CD4-positive, alpha-beta memory T cell (primary cell): ENCODE measurements at regions of chr19 and their contacts with region 1.

Region 1: DNA sequence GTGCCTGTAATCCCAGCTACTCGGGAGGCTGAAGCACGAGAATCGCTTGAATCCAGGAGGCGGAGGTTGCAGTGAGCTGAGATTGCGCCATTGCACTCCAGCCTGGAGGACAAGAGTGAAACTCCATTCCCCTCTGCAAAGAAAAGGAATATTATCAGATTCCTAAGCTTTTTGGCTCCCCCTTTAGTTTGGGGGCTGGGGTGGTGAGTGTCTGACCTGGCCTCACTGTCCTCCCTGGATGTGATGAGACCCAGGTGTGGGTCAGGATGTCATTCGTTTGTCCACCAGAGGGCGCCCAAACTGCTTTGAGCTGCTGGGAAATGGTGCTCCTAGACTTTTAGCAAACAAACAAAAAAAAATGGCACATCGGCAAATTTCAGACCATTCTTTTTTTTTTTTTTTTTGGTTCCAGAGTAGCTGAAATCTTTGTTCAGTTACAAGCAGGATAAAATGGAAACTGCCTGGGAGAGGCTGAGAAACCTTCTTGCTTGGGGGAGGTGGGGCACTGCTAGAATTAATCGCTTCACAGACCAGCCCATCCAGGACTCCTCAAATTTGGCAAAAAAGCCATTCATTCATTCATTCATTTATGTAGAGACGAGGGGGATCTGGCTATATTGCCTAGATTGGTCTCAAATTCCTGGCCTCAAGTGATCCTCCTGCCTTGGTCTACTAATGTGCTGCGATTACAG is 29.4 kb downstream of the SPC24 start:
- DNase-seq: peak; percentile 62 to 66 (median 65)
- H3K4me3 ChIP-seq: no peak overlapping the region
- H3K4me3 Mint-ChIP-seq: no peak overlapping the region
- H3K27ac ChIP-seq: no peak overlapping the region
- H3K27ac Mint-ChIP-seq: peak overlapping the region in 6 of 7 donors; percentile 46 to 82 (median 64)
- H3K4me1 ChIP-seq: no peaks in the 10 kb centered on the region
- H3K4me1 Mint-ChIP-seq: peaks cover 0 to 4% (median under 1%) of the 10 kb centered on the region in 4 donors
- H3K27me3 ChIP-seq: no peaks in the 10 kb centered on the region
- H3K27me3 Mint-ChIP-seq: no peaks in the 10 kb centered on the region

Region 2: DNA sequence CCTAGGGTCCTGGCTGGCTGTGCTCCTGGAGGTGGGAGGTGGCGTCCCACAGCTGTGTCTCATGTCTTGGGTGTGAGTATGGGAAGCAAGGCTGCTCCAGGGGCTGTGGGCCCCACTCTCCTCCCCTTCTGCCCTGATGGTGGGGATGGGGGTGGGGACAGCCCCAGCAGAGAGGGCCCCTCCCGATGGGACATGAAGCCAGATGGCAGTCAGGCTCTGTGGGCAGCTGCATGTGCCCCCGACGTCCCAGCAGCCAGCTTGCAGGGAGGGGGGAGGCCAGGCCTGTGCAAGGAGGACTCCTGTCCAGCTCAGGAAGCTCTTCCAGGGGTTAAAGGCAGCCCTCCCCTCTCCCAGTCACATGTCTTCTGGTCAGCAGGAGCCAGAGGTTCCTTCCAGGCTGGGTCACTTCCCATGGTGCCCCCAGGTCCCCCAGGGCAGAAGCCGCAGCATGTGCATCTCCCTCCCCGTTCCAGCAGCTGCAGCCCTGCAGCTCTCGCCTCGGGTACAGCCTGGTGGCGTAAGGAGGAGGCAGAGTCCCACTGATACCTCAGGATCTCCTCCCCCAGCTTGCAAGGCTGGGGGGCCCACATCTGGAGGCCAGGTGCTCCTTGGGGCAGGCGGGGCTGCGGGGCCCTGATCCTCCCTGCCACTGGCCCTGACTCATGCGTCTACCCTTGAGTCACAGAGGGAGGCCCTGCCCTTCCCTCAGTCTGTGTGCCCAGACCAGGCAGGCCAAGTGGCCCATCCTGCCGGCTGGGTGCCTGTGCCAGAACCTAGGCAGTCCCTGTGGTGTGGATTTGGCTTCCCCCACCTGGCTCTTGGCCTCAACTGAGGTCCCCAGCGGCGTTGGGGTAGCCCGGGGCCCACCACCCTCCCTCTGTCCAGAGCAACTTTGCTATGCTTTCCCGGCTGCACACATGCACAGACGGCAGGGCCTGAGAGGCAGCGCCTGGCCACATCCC is 210.7 kb before region 1 on chr19:
- CTCF ChIA-PET with region 1: no interaction called
- POLR2A ChIA-PET with region 1: no interaction called
- intact Hi-C with region 1: no loop called
- DNase-seq: no peak
- H3K4me3 ChIP-seq: no peak overlapping the region
- H3K4me3 Mint-ChIP-seq: no peak overlapping the region
- H3K27ac ChIP-seq: no peak overlapping the region
- H3K27ac Mint-ChIP-seq: no peak overlapping the region
- H3K4me1 ChIP-seq: no peaks in the 10 kb centered on the region
- H3K4me1 Mint-ChIP-seq: no peaks in the 10 kb centered on the region
- H3K27me3 ChIP-seq: no peaks in the 10 kb centered on the region
- H3K27me3 Mint-ChIP-seq: no peaks in the 10 kb centered on the region

Region 3: DNA sequence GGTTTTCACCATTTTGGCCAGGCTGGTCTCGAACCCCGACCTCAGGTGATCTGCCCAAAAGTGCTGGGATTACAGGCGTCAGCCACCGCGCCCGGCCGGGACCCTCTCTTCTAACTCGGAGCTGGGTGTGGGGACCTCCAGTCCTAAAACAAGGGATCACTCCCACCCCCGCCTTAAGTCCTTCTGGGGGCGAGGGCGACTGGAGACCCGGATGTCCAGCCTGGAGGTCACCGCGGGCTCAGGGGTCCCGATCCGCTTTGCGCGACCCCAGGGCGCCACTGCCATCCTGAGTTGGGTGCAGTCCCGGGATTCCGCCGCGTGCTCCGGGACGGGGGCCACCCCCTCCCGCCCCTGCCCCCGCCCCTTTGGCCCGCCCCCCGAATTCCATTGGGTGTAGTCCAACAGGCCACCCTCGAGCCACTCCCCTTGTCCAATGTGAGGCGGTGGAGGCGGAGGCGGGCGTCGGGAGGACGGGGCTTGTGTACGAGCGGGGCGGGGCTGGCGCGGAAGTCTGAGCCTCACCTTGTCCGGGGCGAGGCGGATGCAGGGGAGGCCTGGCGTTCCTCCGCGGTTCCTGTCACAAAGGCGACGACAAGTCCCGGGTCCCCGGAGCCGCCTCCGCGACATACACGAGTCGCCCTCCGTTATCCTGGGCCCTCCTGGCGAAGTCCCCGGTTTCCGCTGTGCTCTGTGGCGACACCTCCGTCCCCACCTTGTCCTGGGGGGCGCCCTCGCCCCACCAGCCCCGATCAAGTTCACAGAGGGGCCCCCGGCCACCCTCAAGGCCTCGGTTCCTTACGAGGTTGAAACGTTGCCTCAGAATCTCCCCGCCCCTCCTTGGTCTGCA is 35.9 kb before region 1 on chr19:
- CTCF ChIA-PET with region 1: interaction called, 59 read pairs
- POLR2A ChIA-PET with region 1: interaction called, 14 read pairs
- intact Hi-C with region 1: loop called (anchors 2 kb)
- DNase-seq: peak; percentile 94 to 98 (median 97)
- H3K4me3 ChIP-seq: peak overlapping the region; percentile 43 to 64
- H3K4me3 Mint-ChIP-seq: peak overlapping the region; percentile 81 to 93 (median 88)
- H3K27ac ChIP-seq: peak overlapping the region; percentile 98
- H3K27ac Mint-ChIP-seq: peak overlapping the region; percentile 93 to 100 (median 99)
- H3K4me1 ChIP-seq: peaks cover 61% of the 10 kb centered on the region
- H3K4me1 Mint-ChIP-seq: peaks cover 26 to 59% (median 43%) of the 10 kb centered on the region in 4 donors
- H3K27me3 ChIP-seq: no peaks in the 10 kb centered on the region
- H3K27me3 Mint-ChIP-seq: no peaks in the 10 kb centered on the region

Region 4: DNA sequence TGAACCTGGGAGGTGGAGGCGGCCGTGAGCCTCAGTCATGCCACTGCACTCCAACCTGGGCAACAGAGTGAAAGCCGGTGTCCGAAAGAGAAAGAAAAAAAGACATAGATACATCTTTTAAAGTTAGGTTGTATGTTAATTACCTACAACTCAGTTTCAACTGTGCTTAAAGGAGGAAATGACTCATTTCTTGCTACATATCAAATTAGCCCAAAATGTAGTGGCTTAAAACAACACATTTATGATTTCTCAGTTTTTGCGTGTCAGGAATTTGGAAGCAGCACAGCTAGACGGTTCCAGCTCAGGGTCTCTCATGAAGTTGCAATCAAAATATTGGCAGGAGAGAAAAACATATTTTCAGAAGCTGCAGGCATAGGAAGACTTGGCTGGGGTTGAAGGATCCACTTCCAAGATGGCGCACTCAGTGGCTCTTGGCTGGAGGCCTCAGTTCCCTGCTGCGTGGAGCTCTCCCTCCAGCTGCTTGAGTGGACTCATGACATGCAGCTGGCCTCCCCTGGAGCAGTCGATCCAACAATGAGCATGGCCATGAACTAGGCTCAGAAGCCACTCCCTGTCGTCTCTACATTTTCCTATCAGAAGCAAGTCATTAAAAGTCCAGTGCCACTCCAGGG is 29.8 kb before region 1 on chr19:
- CTCF ChIA-PET with region 1: interaction called, 59 read pairs
- POLR2A ChIA-PET with region 1: interaction called, 14 read pairs
- intact Hi-C with region 1: loop called (anchors 2 kb)
- DNase-seq: peak; percentile 31 to 71 (median 38)
- H3K4me3 ChIP-seq: peak overlapping the region in 1 of 2 donors; percentile 32
- H3K4me3 Mint-ChIP-seq: peak overlapping the region; percentile 46 to 91 (median 76)
- H3K27ac ChIP-seq: peak overlapping the region; percentile 89
- H3K27ac Mint-ChIP-seq: peak overlapping the region; percentile 92 to 100 (median 97)
- H3K4me1 ChIP-seq: peaks cover 65% of the 10 kb centered on the region
- H3K4me1 Mint-ChIP-seq: peaks cover 31 to 62% (median 45%) of the 10 kb centered on the region in 4 donors
- H3K27me3 ChIP-seq: no peaks in the 10 kb centered on the region
- H3K27me3 Mint-ChIP-seq: no peaks in the 10 kb centered on the region

Region 5: DNA sequence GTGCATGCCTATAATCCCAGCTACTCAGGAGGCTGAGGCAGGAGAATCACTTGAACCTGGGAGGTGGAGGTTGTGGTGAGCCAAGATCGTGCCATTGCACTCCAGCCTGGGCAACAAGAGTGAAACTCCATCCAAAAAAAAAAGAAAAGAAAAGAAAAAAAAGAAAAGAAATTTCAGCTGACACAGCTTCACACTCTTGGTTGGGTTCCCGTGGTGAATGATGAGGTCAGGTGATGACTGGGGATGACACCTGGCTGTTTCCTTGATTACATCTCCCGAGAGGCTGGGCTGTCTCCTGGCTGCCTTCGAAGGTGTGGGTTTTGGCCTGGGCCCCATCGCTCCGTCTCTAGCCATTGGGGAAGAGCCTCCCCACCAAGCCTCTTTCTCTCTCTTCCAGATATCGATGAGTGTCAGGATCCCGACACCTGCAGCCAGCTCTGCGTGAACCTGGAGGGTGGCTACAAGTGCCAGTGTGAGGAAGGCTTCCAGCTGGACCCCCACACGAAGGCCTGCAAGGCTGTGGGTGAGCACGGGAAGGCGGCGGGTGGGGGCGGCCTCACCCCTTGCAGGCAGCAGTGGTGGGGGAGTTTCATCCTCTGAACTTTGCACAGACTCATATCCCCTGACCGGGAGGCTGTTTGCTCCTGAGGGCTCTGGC is 14.9 kb before region 1 on chr19:
- CTCF ChIA-PET with region 1: interaction called, 34 read pairs
- POLR2A ChIA-PET with region 1: no interaction called
- intact Hi-C with region 1: no loop called
- DNase-seq: no peak
- H3K4me3 ChIP-seq: no peak overlapping the region
- H3K4me3 Mint-ChIP-seq: no peak overlapping the region
- H3K27ac ChIP-seq: no peak overlapping the region
- H3K27ac Mint-ChIP-seq: peak overlapping the region in 1 of 7 donors; percentile 32
- H3K4me1 ChIP-seq: no peaks in the 10 kb centered on the region
- H3K4me1 Mint-ChIP-seq: no peaks in the 10 kb centered on the region
- H3K27me3 ChIP-seq: no peaks in the 10 kb centered on the region
- H3K27me3 Mint-ChIP-seq: no peaks in the 10 kb centered on the region

Region 6: GRCh38 chr19:11137542-11138384 is 11.6 kb after region 1 on chr19:
- CTCF ChIA-PET with region 1: interaction called, 35 read pairs
- POLR2A ChIA-PET with region 1: no interaction called
- intact Hi-C with region 1: no loop called
- DNase-seq: peak; percentile 52 to 67 (median 54)
- H3K4me3 ChIP-seq: peak overlapping the region; percentile 52 to 60
- H3K4me3 Mint-ChIP-seq: peak overlapping the region; percentile 80 to 92 (median 87)
- H3K27ac ChIP-seq: no peak overlapping the region
- H3K27ac Mint-ChIP-seq: peak overlapping the region in 6 of 7 donors; percentile 13 to 91 (median 86)
- H3K4me1 ChIP-seq: peaks cover 15% of the 10 kb centered on the region
- H3K4me1 Mint-ChIP-seq: peaks cover 8 to 21% (median 9%) of the 10 kb centered on the region in 4 donors
- H3K27me3 ChIP-seq: no peaks in the 10 kb centered on the region
- H3K27me3 Mint-ChIP-seq: no peaks in the 10 kb centered on the region

Region 7: GRCh38 chr19:11203194-11204075 is 77.3 kb after region 1 on chr19:
- CTCF ChIA-PET with region 1: interaction called, 18 read pairs
- POLR2A ChIA-PET with region 1: no interaction called
- intact Hi-C with region 1: no loop called
- DNase-seq: peak in 1 of 5 donors; percentile 18
- H3K4me3 ChIP-seq: no peak overlapping the region
- H3K4me3 Mint-ChIP-seq: no peak overlapping the region
- H3K27ac ChIP-seq: no peak overlapping the region
- H3K27ac Mint-ChIP-seq: no peak overlapping the region
- H3K4me1 ChIP-seq: no peaks in the 10 kb centered on the region
- H3K4me1 Mint-ChIP-seq: peaks cover 0 to 1% (median 0%) of the 10 kb centered on the region in 4 donors
- H3K27me3 ChIP-seq: no peaks in the 10 kb centered on the region
- H3K27me3 Mint-ChIP-seq: no peaks in the 10 kb centered on the region